Head of caudate nucleus (tissue), 42 donors: ENCODE measurements at regions of chr12 and their contacts with region 1.

Region 1: DNA sequence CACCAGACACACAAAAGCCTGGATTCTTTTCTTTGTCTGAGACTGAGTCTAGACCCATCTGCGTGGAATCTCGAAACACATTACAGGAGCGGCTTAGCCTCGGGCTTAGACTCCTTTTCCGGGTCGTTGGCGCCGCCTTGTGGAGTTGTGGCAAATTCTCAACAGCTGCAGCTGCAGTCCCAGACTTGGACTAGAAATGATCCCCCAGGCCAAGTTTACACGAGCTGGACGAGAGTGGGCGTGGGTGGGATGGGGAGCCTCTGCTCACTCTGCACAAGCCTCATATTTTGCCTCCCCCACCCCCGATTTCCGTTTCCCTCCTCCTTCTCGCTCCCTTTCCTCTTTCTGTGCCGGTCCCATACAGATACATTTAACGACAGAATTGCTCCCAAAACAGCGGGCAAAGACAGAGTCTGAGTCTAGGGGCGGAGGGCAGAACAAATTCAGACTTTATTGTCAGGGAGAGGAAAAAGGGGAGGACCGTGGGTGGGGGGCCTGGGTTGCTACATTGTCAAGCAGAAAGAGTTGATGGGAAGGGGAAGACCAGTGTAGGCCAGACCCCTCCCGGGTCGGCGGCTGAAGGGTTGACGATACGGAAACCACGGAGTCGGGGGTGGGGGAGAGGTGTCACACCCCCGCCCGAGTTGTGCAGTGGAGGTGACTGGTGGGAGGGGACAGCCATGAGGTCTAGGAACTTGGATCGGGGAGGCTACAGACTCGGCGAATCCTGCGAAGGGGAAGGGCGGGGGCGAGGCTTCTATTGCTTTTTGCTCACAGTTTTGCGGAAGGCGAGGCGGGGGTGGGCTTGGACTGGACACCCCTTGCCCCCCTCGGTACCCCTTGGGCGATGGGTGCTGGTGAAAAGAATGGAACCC is 4.7 kb upstream of the GPR84 start:
- DNase-seq: peak; percentile 86 to 97 (median 94)

Region 2: GRCh38 chr12:54164387-54165145 is 204.4 kb before region 1 on chr12:
- intact Hi-C with region 1: no loop called
- DNase-seq: no peak

Region 3: DNA sequence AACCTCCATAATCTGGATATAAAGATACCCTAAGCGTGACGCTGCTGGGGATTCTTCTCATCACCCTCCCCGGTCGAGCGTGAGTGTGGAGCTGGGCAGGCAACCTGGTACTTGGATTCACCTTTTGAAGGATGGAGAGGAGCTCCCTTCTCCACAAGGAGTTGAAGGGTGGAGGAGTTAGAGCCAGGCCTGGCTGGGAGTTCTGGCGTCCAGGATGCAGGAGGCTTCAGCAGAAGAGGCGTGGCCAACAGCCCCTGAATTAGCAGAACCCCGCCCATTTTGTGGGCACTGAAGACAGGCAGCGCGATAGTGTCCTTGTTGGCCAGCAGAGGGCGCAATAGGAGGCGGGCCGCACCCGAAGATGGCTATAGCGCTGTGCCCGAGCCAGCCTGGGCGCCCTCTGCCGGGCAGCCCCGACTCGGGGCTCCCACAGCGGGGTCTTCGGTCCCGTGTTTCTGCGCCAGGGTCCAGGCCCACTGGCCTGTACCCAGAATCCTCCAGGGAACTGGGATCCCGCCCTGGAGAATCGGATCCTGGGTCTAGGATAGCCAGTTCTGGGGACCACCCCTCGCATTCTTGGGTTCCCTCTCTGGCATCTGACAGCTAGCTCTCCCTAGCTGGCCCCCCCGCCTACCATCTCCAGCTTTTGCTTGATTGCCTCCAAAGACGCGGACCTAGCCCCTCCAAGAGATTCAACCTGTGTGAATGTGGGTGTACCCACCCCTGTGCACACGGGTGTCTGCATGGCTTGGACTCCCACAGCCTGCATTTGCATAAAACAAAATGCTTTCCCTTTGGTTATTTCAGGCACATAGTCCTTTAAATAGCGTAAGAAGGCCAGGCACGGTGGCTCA is 154.2 kb before region 1 on chr12:
- intact Hi-C with region 1: loop called (anchors 5 kb)
- DNase-seq: peak; percentile 60 to 96 (median 90)

Region 4: GRCh38 chr12:54325442-54326093 is 43.4 kb before region 1 on chr12:
- intact Hi-C with region 1: no loop called
- DNase-seq: no peak